H1 (cell line): ENCODE measurements at regions of chr6 and their contacts with region 1.

Region 1: DNA sequence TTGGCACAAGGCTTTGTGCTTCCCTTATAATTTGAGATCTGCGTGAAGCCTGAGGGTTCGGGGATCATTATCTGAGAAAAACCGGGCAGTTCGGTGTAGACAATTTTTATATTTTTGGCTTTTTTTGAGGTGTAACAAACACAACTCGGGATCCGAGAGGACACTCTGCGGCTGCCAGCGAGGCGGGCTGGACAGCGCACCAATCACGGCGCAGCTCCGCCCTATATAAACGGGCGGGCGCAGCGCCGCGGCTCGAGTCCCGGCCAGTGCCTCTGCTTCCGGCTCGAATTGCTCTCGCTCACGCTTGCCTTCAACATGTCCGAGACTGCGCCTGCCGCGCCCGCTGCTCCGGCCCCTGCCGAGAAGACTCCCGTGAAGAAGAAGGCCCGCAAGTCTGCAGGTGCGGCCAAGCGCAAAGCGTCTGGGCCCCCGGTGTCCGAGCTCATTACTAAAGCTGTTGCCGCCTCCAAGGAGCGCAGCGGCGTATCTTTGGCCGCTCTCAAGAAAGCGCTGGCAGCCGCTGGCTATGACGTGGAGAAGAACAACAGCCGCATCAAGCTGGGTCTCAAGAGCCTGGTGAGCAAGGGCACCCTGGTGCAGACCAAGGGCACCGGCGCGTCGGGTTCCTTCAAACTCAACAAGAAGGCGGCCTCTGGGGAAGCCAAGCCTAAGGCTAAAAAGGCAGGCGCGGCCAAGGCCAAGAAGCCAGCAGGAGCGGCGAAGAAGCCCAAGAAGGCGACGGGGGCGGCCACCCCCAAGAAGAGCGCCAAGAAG is 69.0 kb downstream of the HFE start:
- DNase-seq: peak; percentile 67 to 95
- H3K4me3 ChIP-seq: peak overlapping the region; percentile 90 to 100 (median 92)
- H3K27ac ChIP-seq: peak overlapping the region; percentile 97
- H3K4me1 ChIP-seq: peaks cover 0 to 3% (median 3%) of the 10 kb centered on the region in 4 experiments; a peak in 5 of 7 replicates
- H3K27me3 ChIP-seq: no peaks in the 10 kb centered on the region
- CTCF ChIP-seq: no peak
- EP300 ChIP-seq: no peak
- POLR2A ChIP-seq: peak; percentile 87 to 97
- RAD21 ChIP-seq: 0 out of 4 replicates have a peak, but pooled peaks have one; percentile 2 to 9

Region 2: DNA sequence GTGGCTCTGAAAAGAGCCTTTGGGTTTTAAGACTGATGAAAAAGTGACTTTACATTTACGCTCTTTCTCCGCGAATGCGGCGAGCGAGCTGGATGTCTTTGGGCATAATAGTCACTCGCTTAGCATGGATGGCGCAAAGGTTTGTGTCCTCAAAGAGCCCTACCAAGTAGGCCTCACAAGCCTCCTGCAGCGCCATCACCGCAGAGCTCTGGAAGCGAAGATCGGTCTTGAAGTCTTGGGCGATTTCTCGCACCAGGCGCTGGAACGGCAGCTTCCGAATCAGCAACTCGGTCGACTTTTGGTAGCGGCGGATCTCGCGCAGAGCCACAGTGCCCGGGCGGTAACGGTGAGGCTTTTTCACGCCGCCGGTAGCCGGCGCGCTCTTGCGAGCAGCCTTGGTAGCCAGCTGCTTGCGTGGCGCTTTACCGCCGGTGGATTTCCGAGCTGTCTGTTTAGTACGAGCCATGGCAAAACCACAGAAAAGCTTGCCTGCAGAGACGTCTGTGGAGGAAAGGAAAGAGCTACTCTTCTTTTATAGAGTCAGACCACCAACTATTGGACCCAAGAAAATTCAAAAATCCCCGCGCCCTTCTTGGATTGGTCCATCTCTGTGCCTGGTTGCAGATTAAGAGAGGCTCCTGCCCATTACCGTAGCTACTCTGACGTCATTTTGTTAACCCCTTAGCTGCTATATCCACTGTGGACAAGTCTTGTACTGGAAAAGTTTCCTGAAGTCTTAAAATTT is 124.5 kb before region 1 on chr6:
- CTCF ChIA-PET with region 1: no interaction called
- POLR2A ChIA-PET with region 1: interaction called, 451 read pairs
- DNase-seq: peak; percentile 82 to 88
- H3K4me3 ChIP-seq: peak overlapping the region; percentile 81 to 95 (median 92)
- H3K27ac ChIP-seq: peak overlapping the region; percentile 96
- H3K4me1 ChIP-seq: peaks cover 2 to 18% (median 13%) of the 10 kb centered on the region in 4 experiments; a peak in 5 of 7 replicates
- H3K27me3 ChIP-seq: no peaks in the 10 kb centered on the region
- CTCF ChIP-seq: no peak
- EP300 ChIP-seq: peak in 1 of 2 experiments; percentile 2; a peak in 1 of 3 replicates
- POLR2A ChIP-seq: peak; percentile 99 to 100
- RAD21 ChIP-seq: no peak

Region 3: GRCh38 chr6:26141378-26141904 is 14.8 kb before region 1 on chr6:
- CTCF ChIA-PET with region 1: no interaction called
- POLR2A ChIA-PET with region 1: interaction called, 1,244 read pairs
- DNase-seq: no peak
- H3K4me3 ChIP-seq: no peak overlapping the region
- H3K27ac ChIP-seq: no peak overlapping the region
- H3K4me1 ChIP-seq: no peaks in the 10 kb centered on the region
- H3K27me3 ChIP-seq: no peaks in the 10 kb centered on the region
- CTCF ChIP-seq: no peak
- EP300 ChIP-seq: no peak
- POLR2A ChIP-seq: no peak
- RAD21 ChIP-seq: no peak

Region 4: GRCh38 chr6:26234421-26235296 is 78.4 kb after region 1 on chr6:
- CTCF ChIA-PET with region 1: no interaction called
- POLR2A ChIA-PET with region 1: interaction called, 122 read pairs
- DNase-seq: peak in 1 of 2 experiments; percentile 85
- H3K4me3 ChIP-seq: peak overlapping the region; percentile 83 to 91 (median 88)
- H3K27ac ChIP-seq: peak overlapping the region; percentile 93
- H3K4me1 ChIP-seq: peaks cover 0 to 3% (median 0%) of the 10 kb centered on the region in 4 experiments; a peak in 3 of 7 replicates
- H3K27me3 ChIP-seq: no peaks in the 10 kb centered on the region
- CTCF ChIP-seq: no peak
- EP300 ChIP-seq: no peak
- POLR2A ChIP-seq: peak; percentile 86
- RAD21 ChIP-seq: no peak

Region 5: DNA sequence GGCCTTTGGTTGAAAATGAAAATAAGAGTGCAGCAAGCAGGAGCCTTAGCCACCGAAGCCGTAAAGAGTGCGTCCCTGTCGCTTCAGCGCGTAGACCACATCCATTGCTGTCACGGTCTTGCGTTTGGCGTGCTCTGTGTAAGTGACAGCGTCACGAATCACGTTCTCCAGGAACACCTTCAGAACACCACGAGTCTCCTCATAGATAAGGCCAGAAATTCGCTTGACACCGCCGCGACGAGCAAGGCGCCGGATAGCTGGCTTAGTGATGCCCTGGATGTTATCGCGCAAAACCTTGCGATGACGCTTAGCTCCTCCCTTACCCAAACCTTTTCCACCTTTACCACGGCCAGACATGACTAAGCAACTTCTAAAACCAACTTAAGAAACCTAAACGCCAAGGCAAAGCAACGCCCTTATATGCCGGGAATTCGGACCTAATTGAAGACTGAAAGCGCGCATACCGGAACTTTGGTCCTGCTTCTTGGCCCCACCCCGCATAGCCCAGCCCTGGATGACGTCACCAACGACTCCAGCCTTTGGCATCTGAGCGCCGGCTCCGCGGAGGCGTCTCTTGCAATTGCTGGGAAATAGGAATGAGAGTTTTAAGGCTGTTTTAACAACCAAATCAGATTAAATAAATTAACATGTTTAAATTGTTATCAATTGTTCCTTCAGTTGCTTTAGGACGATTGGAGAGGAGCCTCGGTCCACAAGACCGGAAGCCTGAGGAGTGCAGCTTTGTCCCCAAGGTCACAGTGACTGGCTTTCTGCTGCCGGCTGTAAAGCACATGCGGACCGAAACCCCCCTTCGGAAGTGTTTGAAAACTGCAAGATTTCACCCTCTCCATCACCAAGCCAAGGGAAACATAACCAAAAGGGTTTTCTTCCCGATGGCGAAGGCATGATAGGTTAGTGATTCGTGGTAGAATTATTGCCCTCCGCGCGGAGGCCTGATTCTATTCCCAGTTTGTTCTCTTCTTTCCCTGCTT is 129.2 kb after region 1 on chr6:
- CTCF ChIA-PET with region 1: no interaction called
- POLR2A ChIA-PET with region 1: interaction called, 80 read pairs
- DNase-seq: peak; percentile 94 to 100
- H3K4me3 ChIP-seq: peak overlapping the region; percentile 74 to 95 (median 80)
- H3K27ac ChIP-seq: peak overlapping the region; percentile 96
- H3K4me1 ChIP-seq: peaks cover 0 to 7% (median 2%) of the 10 kb centered on the region in 4 experiments; a peak in 1 of 7 replicates
- H3K27me3 ChIP-seq: no peaks in the 10 kb centered on the region
- CTCF ChIP-seq: no peak
- EP300 ChIP-seq: peak in 1 of 2 experiments; percentile 97; a peak in 2 of 3 replicates
- POLR2A ChIP-seq: peak; percentile 100
- RAD21 ChIP-seq: no peak

Region 6: DNA sequence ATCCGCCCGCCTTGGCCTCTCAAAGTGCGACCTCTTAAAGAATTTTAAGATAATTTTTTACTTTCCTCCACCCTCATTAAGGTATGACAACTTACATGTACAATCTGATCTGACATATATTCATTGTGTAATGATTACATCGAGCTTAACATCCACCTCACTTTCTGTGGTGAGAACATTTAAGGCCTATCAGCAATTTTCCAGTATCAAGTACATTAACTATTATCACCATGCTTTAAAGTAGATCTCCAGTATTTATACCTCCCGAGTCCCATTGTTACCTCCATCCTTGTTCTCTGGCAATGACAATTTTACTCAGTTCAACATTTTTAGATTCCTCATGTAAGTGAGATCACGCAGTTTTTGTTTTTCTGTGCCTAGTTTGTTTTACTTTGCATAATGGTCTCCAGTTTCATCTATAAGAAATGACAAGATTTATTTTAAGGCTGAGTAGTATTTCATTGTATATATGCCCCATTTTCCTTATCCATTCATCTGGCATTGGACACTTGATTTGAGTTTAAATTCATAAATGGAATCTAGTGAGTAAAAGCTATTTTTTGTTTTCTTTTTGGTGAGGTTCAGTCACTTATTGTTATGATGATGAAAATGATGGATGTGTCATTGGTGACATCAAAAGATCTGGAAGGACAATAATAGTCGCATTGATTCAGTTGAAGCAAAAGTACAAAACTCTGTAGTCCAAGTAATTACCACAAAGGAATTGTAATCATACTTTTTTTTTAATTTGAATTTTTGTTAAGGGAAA is 1668.9 kb after region 1 on chr6:
- CTCF ChIA-PET with region 1: no interaction called
- POLR2A ChIA-PET with region 1: interaction called, 10 read pairs
- DNase-seq: no peak
- H3K4me3 ChIP-seq: peak overlapping the region; percentile 59 to 90 (median 81)
- H3K27ac ChIP-seq: peak overlapping the region; percentile 95; the same call in 1 of the 2 replicates
- H3K4me1 ChIP-seq: peaks cover 0 to 3% (median 0%) of the 10 kb centered on the region in 4 experiments; a peak in 1 of 7 replicates
- H3K27me3 ChIP-seq: no peaks in the 10 kb centered on the region
- CTCF ChIP-seq: no peak
- EP300 ChIP-seq: no peak
- POLR2A ChIP-seq: peak in 1 of 2 experiments; percentile 32; a peak in 2 of 3 replicates
- RAD21 ChIP-seq: no peak